Activated CD4-positive, alpha-beta T cell treated with anti-CD3 and anti-CD28 coated beads, Interleukin-2, amount 10 ng/mL, durations not matched to agents 7 days and 5 days (primary cell): ENCODE measurements at regions of chr4 and their contacts with region 1.

Region 1: GRCh38 chr4:9704551-9705332 is 76.7 kb upstream of the DRD5 start:
- DNase-seq: no peak
- H3K4me3 Mint-ChIP-seq: no peak overlapping the region
- H3K27ac Mint-ChIP-seq: no peak overlapping the region
- H3K4me1 Mint-ChIP-seq: peaks cover 29% of the 10 kb centered on the region
- H3K27me3 Mint-ChIP-seq: no peaks in the 10 kb centered on the region

Region 2: DNA sequence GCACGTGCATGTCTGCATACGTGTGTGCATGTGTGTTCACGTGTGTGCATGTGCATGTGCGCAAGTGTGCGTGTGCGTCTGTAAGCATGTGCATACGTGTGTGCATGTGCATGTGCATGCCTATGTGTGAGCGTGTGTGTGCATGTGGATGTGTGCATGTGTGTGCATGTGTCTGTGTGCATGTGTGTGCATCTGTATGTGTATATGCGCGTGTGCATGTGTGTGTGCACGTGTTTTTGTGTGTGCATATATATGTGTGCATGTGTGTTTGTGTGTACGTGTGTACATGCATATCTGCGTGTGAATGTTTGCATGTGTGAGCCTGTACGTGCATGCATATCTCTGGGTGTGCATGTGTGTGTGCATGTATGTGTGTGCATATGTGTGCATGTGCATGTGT is 41.0 kb after region 1 on chr4:
- CTCF ChIA-PET with region 1: no interaction called
- POLR2A ChIA-PET with region 1: no interaction called
- DNase-seq: no peak
- H3K4me3 Mint-ChIP-seq: no peak overlapping the region
- H3K27ac Mint-ChIP-seq: no peak overlapping the region
- H3K4me1 Mint-ChIP-seq: peaks cover 6% of the 10 kb centered on the region
- H3K27me3 Mint-ChIP-seq: peaks cover 2% of the 10 kb centered on the region

Region 3: GRCh38 chr4:9781343-9782135 is 76.8 kb after region 1 on chr4 and contains the start of gene DRD5:
- CTCF ChIA-PET with region 1: no interaction called
- POLR2A ChIA-PET with region 1: no interaction called
- DNase-seq: no peak
- H3K4me3 Mint-ChIP-seq: no peak within 1 kb of the TSS
- H3K27ac Mint-ChIP-seq: no peak within 1 kb of the TSS
- H3K4me1 Mint-ChIP-seq: no peaks in the 10 kb centered on the region
- H3K27me3 Mint-ChIP-seq: peaks cover 51% of the 10 kb centered on the region
- total RNA-seq, gene DRD5: not detected

Region 4: DNA sequence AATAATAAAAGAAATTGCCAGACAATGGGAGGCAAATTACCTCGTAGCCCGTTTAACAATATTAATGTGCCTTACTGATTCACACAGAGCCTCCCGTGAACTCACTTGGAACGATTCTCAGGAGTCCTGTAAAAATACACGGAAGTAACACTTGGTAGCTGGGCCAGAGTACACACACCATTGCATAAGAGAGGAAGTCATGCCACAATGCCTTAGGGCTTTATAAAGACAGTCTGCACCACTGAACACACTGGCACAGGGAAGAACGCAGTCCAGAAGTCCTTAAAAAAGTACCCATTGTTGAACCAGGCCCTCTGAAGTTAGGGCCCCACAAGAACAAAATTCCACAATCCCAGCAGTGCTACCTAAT is 301.5 kb after region 1 on chr4:
- CTCF ChIA-PET with region 1: interaction called, 12 read pairs
- POLR2A ChIA-PET with region 1: no interaction called
- DNase-seq: no peak
- H3K4me3 Mint-ChIP-seq: no peak overlapping the region
- H3K27ac Mint-ChIP-seq: no peak overlapping the region
- H3K4me1 Mint-ChIP-seq: peaks cover 45% of the 10 kb centered on the region
- H3K27me3 Mint-ChIP-seq: no peaks in the 10 kb centered on the region

Region 5: GRCh38 chr4:10013722-10014121 is 309.0 kb after region 1 on chr4:
- CTCF ChIA-PET with region 1: interaction called, 19 read pairs
- POLR2A ChIA-PET with region 1: no interaction called
- DNase-seq: peak; percentile 54
- H3K4me3 Mint-ChIP-seq: no peak overlapping the region
- H3K27ac Mint-ChIP-seq: no peak overlapping the region
- H3K4me1 Mint-ChIP-seq: peaks cover 16% of the 10 kb centered on the region
- H3K27me3 Mint-ChIP-seq: no peaks in the 10 kb centered on the region

Region 6: GRCh38 chr4:10212400-10212799 is 507.7 kb after region 1 on chr4:
- CTCF ChIA-PET with region 1: no interaction called
- POLR2A ChIA-PET with region 1: no interaction called
- DNase-seq: no peak
- H3K4me3 Mint-ChIP-seq: no peak overlapping the region
- H3K27ac Mint-ChIP-seq: no peak overlapping the region
- H3K4me1 Mint-ChIP-seq: no peaks in the 10 kb centered on the region
- H3K27me3 Mint-ChIP-seq: no peaks in the 10 kb centered on the region